Mammary epithelial cell (primary cell): ENCODE measurements at regions of chr19 and their contacts with region 1.

Region 1: GRCh38 chr19:11987405-11988281 is 22.8 kb downstream of the ZNF763 start:
- DNase-seq: peak; percentile 91
- H3K4me3 ChIP-seq: peak overlapping the region; percentile 83 to 86 (median 84)
- H3K27ac ChIP-seq: peak overlapping the region; percentile 24
- H3K4me1 ChIP-seq: no peaks in the 10 kb centered on the region
- H3K27me3 ChIP-seq: no peaks in the 10 kb centered on the region
- CTCF ChIP-seq: no peak

Region 2: DNA sequence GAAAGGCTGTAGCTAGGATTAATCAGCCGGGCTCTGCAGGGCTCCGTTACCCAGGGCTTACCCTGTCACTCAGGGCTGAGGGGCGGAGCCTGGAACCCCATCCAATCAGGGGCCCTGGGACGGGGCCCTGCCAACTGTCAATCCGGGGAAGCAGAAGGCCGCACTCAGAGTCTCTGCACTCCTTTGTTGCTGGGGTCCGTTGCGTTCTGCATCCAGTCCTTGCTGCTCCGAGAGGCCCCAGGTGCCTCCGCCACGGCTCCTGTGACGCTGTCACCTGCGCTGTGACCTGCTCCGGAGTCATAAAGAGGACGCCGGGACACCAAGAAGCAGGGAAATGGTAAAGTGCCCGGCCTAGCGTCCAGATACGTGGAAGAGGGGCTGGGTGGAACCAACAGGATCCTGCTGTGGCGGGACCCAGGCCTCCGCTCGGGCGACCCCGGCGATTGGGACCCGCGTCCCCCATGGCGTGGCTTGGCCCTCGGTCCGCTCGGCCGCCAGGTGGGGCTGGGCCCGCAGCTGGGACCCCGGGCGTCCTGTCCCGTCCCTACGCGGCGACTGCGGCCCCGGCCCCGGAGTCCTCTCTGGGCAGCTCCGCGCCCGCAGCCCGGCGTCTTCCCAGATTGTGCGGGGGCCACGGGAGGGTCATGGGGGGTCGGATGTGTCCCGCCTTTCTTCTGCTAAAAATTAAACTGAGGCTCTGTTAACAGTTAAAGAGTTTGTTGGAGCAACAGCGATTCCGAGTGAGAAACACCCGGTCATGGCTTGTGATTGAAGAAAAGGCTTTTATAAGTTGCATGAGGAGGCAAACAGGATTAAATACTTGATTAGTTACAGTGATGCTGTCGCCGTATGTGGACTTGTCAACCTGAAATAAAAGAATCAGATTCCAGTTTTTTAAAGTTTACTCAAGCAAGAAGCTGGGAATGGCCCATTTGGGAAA is 189.0 kb before region 1 on chr19 and contains the start of gene ZNF491:
- CTCF ChIA-PET with region 1: interaction called, 20 read pairs
- dilution Hi-C with region 1: no loop called
- in situ Hi-C with region 1: no loop called
- intact Hi-C with region 1: loop called (anchors 1 kb)
- DNase-seq: peak; percentile 78
- H3K4me3 ChIP-seq: peak within 1 kb of the TSS; percentile 46 to 63 (median 54)
- H3K27ac ChIP-seq: no peak within 1 kb of the TSS
- H3K4me1 ChIP-seq: peaks cover 4% of the 10 kb centered on the region
- H3K27me3 ChIP-seq: no peaks in the 10 kb centered on the region
- CTCF ChIP-seq: peak in 1 of 2 donors; percentile 21
- total RNA-seq, gene ZNF491: 1.4 to 1.5 TPM

Region 3: DNA sequence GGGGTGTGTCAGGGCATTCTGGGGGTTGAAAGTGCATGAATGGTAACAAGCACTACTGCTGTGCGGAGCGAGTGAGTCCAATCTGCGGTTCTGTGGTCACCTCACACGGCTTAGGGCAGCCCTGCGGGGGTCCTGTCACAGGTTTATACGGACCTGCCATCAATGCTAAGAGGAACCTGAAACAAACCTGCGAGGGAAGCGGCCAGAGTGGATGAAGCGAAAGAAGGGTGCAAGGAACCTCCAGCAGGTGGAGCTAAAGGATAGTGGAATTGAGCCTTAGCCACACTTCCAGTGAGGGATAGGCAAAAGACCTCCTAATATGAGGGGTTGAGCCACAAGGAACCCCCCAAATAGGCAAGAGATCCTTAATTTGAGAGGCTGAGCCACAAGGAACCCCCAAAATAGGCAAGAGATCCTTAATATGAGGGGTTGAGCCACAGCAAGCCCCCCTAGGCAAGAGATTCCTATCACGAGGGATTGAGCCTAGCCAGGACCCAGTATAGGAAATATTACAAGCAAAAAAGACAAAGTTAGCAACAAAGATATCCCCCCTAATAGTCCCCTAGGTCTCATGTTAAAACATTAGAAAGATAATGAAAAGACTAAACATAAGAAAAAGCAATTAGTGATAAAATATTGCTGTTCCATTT is 106.4 kb before region 1 on chr19:
- CTCF ChIA-PET with region 1: interaction called, 4 read pairs
- dilution Hi-C with region 1: no loop called
- in situ Hi-C with region 1: no loop called
- intact Hi-C with region 1: loop called (anchors 1 kb)
- DNase-seq: peak; percentile 48
- H3K4me3 ChIP-seq: no peak overlapping the region
- H3K27ac ChIP-seq: no peak overlapping the region
- H3K4me1 ChIP-seq: no peaks in the 10 kb centered on the region
- H3K27me3 ChIP-seq: no peaks in the 10 kb centered on the region
- CTCF ChIP-seq: peak; percentile 38 to 73

Region 4: DNA sequence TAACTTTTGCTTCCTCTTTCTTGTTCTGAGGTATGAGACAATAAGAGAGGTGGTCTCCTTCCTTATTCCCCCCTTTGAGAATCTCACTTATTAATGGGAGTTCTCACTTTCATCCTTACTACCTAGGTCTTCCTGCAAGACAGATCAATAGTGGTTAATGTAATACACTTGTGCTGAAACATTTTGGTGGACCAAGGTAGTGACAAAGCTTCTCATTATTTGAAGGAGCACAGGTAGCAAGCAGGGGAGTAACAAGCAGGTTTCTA is 44.9 kb before region 1 on chr19:
- CTCF ChIA-PET with region 1: no interaction called
- dilution Hi-C with region 1: loop called (anchors 5 kb)
- in situ Hi-C with region 1: no loop called
- intact Hi-C with region 1: no loop called
- DNase-seq: no peak
- H3K4me3 ChIP-seq: no peak overlapping the region
- H3K27ac ChIP-seq: no peak overlapping the region
- H3K4me1 ChIP-seq: no peaks in the 10 kb centered on the region
- H3K27me3 ChIP-seq: no peaks in the 10 kb centered on the region
- CTCF ChIP-seq: no peak

Region 5: GRCh38 chr19:12035220-12036153 is 47.8 kb after region 1 on chr19 and contains the start of gene ZNF433:
- CTCF ChIA-PET with region 1: no interaction called
- dilution Hi-C with region 1: no loop called
- in situ Hi-C with region 1: no loop called
- intact Hi-C with region 1: loop called (anchors 2 kb)
- DNase-seq: peak; percentile 90
- H3K4me3 ChIP-seq: peak within 1 kb of the TSS; percentile 53 to 76 (median 67)
- H3K27ac ChIP-seq: no peak within 1 kb of the TSS
- H3K4me1 ChIP-seq: peaks cover 6% of the 10 kb centered on the region
- H3K27me3 ChIP-seq: no peaks in the 10 kb centered on the region
- CTCF ChIP-seq: no peak
- total RNA-seq, gene ZNF433: 2.7 to 4.5 TPM